ENCODE measurements at regions of chr12 and their contacts with region 1.

Region 1: GRCh38 chr12:49109641-49110463 is 795 bp downstream of the LMBR1L start:
- DNase-seq: no peak
- ATAC-seq: peak; percentile 3
- H3K4me3 ChIP-seq: peak overlapping the region; percentile 94
- H3K27ac ChIP-seq: 0 out of 2 replicates have a peak overlapping the region, but pooled peaks have one; percentile 10
- H3K4me1 ChIP-seq: peaks cover 30% of the 10 kb centered on the region
- H3K27me3 ChIP-seq: no peaks in the 10 kb centered on the region
- CTCF ChIP-seq: no peak

Region 2: GRCh38 chr12:49018261-49019119 is 91.4 kb before region 1 on chr12 and contains the start of gene PRKAG1:
- CTCF ChIA-PET with region 1: no interaction called
- POLR2A ChIA-PET with region 1: no interaction called
- intact Hi-C with region 1: no loop called
- DNase-seq: peak; percentile 97
- ATAC-seq: peak; percentile 90
- H3K4me3 ChIP-seq: peak within 1 kb of the TSS; percentile 93
- H3K27ac ChIP-seq: peak within 1 kb of the TSS; percentile 81
- H3K4me1 ChIP-seq: peaks cover 18% of the 10 kb centered on the region
- H3K27me3 ChIP-seq: no peaks in the 10 kb centered on the region
- CTCF ChIP-seq: peak; percentile 58
- total RNA-seq, gene PRKAG1: 62.1 and 66.5 TPM in 2 replicates

Region 3: GRCh38 chr12:49098035-49098451 is 11.8 kb before region 1 on chr12:
- CTCF ChIA-PET with region 1: no interaction called
- POLR2A ChIA-PET with region 1: no interaction called
- intact Hi-C with region 1: loop called (anchors 2 kb)
- DNase-seq: peak; percentile 58
- ATAC-seq: no peak
- H3K4me3 ChIP-seq: no peak overlapping the region
- H3K27ac ChIP-seq: no peak overlapping the region
- H3K4me1 ChIP-seq: peaks cover 9% of the 10 kb centered on the region; the same call in 1 of the 2 replicates
- H3K27me3 ChIP-seq: peaks cover 14% of the 10 kb centered on the region
- CTCF ChIP-seq: peak; percentile 82

Measured in PC-3 (cell line).